ENCODE measurements at regions of chr11 and their contacts with region 1.

Region 1: DNA sequence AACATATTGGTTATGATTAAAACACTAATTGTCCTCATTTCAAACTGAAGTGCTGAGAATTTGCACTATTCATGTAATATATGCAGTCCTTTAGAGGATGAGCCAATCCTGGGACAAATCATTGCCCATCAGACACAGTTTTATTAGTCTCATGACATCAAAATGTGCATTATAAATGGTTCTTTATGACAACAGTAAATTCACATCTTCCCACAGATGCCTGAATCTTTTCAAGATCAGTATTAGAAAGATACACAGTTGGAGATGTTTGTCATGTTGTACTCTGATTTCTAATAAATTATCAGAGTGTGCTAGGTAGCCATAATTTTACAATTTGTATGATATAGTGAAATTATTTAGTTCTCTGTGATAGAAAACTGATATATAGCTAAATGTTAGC is 813.5 kb downstream of the FAM181B start:
- DNase-seq: no peak
- H3K4me3 ChIP-seq: no peak overlapping the region
- H3K27ac ChIP-seq: no peak overlapping the region
- H3K4me1 ChIP-seq: no peaks in the 10 kb centered on the region
- H3K27me3 ChIP-seq: no peaks in the 10 kb centered on the region
- CTCF ChIP-seq: no peak
- EP300 ChIP-seq: no peak
- POLR2A ChIP-seq: no peak
- RAD21 ChIP-seq: no peak

Region 2: GRCh38 chr11:81852896-81853295 is 67.3 kb before region 1 on chr11:
- CTCF ChIA-PET with region 1: no interaction called
- POLR2A ChIA-PET with region 1: no interaction called
- DNase-seq: no peak
- H3K4me3 ChIP-seq: no peak overlapping the region
- H3K27ac ChIP-seq: no peak overlapping the region
- H3K4me1 ChIP-seq: no peaks in the 10 kb centered on the region
- H3K27me3 ChIP-seq: no peaks in the 10 kb centered on the region
- CTCF ChIP-seq: no peak
- EP300 ChIP-seq: no peak
- POLR2A ChIP-seq: no peak
- RAD21 ChIP-seq: no peak

Region 3: DNA sequence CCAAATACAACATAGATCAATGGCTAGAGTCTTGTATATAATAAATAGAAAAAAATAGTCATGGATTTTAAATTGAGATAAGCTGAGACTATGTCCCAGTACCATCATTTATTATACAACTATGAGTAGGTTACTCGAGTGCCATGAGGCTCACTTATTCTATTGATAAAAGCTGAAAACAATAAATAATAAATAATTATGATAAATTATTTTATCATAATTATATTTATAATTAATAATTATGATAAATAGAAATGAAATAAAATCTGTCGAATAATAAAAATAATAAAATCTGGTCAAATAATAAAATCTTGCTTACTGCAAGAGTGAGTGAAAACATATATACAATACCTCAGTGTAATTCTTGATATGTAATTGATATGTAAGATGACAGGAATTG is 12.1 kb after region 1 on chr11:
- CTCF ChIA-PET with region 1: interaction called, 11 read pairs
- POLR2A ChIA-PET with region 1: no interaction called
- DNase-seq: no peak
- H3K4me3 ChIP-seq: no peak overlapping the region
- H3K27ac ChIP-seq: no peak overlapping the region
- H3K4me1 ChIP-seq: no peaks in the 10 kb centered on the region
- H3K27me3 ChIP-seq: no peaks in the 10 kb centered on the region
- CTCF ChIP-seq: no peak
- EP300 ChIP-seq: no peak
- POLR2A ChIP-seq: no peak
- RAD21 ChIP-seq: no peak

Measured in H1 (cell line).